ENCODE measurements at regions of chr1 and their contacts with region 1.

Region 1: GRCh38 chr1:227787513-227788270 is 27.8 kb upstream of the PRSS38 start:
- DNase-seq: peak; percentile 95
- H3K4me3 ChIP-seq: peak overlapping the region; percentile 38 to 55 (median 51)
- H3K27ac ChIP-seq: peak overlapping the region; percentile 69 to 80 (median 76)
- H3K4me1 ChIP-seq: peaks cover 14 to 25% (median 19%) of the 10 kb centered on the region in 4 donors
- H3K27me3 ChIP-seq: peaks cover 7% of the 10 kb centered on the region
- CTCF ChIP-seq: no peak
- EP300 ChIP-seq: no peak
- POLR2A ChIP-seq: peak; percentile 77

Region 2: DNA sequence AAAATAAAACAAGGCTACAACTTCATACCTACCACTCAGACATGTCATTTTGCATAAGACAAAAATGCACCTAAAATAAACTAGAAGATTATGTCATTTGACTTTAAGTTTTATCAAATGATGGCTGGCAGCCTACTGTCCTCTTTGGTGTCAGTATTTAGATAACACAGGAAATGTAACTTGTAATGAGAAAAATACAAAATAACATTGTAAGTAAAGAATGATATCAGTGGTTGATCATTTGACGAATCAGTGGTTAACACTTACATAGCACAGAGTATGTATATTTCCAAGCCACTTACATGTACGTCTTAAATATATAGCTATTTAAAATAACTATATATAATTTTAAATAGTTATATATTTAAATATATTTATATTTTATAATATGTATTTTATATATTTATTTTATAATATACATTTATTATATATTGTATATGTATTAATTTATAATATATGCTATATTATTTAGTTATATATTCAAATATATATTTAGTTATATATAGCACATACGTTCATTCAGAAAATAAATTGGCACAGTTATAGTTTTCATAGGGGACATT is 180.3 kb before region 1 on chr1:
- in situ Hi-C with region 1: no loop called
- intact Hi-C with region 1: no loop called
- DNase-seq: no peak
- H3K4me3 ChIP-seq: no peak overlapping the region
- H3K27ac ChIP-seq: no peak overlapping the region
- H3K4me1 ChIP-seq: no peaks in the 10 kb centered on the region
- H3K27me3 ChIP-seq: no peaks in the 10 kb centered on the region
- CTCF ChIP-seq: no peak
- EP300 ChIP-seq: no peak
- POLR2A ChIP-seq: no peak

Region 3: GRCh38 chr1:227707807-227708206 is 79.9 kb before region 1 on chr1:
- in situ Hi-C with region 1: no loop called
- intact Hi-C with region 1: no loop called
- DNase-seq: no peak
- H3K4me3 ChIP-seq: no peak overlapping the region
- H3K27ac ChIP-seq: no peak overlapping the region
- H3K4me1 ChIP-seq: no peaks in the 10 kb centered on the region
- H3K27me3 ChIP-seq: no peaks in the 10 kb centered on the region
- CTCF ChIP-seq: no peak
- EP300 ChIP-seq: no peak
- POLR2A ChIP-seq: no peak

Region 4: GRCh38 chr1:227728059-227728891 is 59.4 kb before region 1 on chr1:
- in situ Hi-C with region 1: no loop called
- intact Hi-C with region 1: loop called (anchors 5 kb)
- DNase-seq: peak; percentile 91
- H3K4me3 ChIP-seq: peak overlapping the region; percentile 56 to 61 (median 58)
- H3K27ac ChIP-seq: peak overlapping the region; percentile 59 to 79 (median 76)
- H3K4me1 ChIP-seq: peaks cover 11 to 21% (median 17%) of the 10 kb centered on the region in 4 donors
- H3K27me3 ChIP-seq: no peaks in the 10 kb centered on the region
- CTCF ChIP-seq: no peak
- EP300 ChIP-seq: no peak
- POLR2A ChIP-seq: peak; percentile 20

Region 5: DNA sequence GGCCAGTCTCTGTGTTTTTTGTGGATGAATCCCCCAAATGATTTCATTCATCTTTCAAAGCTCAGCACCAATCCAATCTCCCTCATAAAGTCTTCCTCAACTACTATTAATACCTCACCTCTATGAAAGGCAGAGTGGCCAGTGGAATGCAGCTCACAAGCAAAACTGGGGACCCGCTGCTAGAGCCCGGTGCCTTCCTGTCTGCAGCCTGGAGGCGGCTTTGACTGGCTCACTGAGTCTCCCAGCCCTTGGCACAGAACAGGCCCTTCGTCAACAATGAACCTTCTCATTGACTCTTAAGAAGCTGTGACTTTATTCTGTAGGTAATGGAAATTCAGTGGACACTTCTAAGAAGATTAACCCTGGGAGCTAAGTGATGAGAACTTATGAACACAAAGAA is 1396.4 kb after region 1 on chr1:
- in situ Hi-C with region 1: no loop called
- intact Hi-C with region 1: loop called (anchors 5 kb)
- DNase-seq: no peak
- H3K4me3 ChIP-seq: no peak overlapping the region
- H3K27ac ChIP-seq: no peak overlapping the region
- H3K4me1 ChIP-seq: no peaks in the 10 kb centered on the region
- H3K27me3 ChIP-seq: no peaks in the 10 kb centered on the region
- CTCF ChIP-seq: no peak
- EP300 ChIP-seq: no peak
- POLR2A ChIP-seq: no peak

Measured in transverse colon (tissue), 4 donors.